ENCODE measurements at regions of chr1 and their contacts with region 1.

Region 1: GRCh38 chr1:101550581-101550980 is 313.8 kb downstream of the S1PR1 start:
- DNase-seq: no peak
- H3K4me3 ChIP-seq: no peak overlapping the region
- H3K27ac ChIP-seq: no peak overlapping the region
- H3K4me1 ChIP-seq: no peaks in the 10 kb centered on the region
- H3K27me3 ChIP-seq: peaks cover 0 to 2% of the 10 kb centered on the region in 2 experiments
- CTCF ChIP-seq: no peak
- POLR2A ChIP-seq: no peak

Region 2: GRCh38 chr1:101540161-101540560 is 10.4 kb before region 1 on chr1:
- CTCF ChIA-PET with region 1: interaction called, 10 read pairs
- POLR2A ChIA-PET with region 1: no interaction called
- dilution Hi-C with region 1: no loop called
- intact Hi-C with region 1: no loop called
- DNase-seq: no peak
- H3K4me3 ChIP-seq: no peak overlapping the region
- H3K27ac ChIP-seq: no peak overlapping the region
- H3K4me1 ChIP-seq: no peaks in the 10 kb centered on the region
- H3K27me3 ChIP-seq: peaks cover 3 to 4% of the 10 kb centered on the region in 2 experiments
- CTCF ChIP-seq: no peak
- POLR2A ChIP-seq: no peak